Activated naive CD4-positive, alpha-beta T cell treated with anti-CD3 and anti-CD28 coated beads for 36 hours (primary cell): ENCODE measurements at regions of chr12 and their contacts with region 1.

Region 1: GRCh38 chr12:24778486-24779304 is 170.2 kb downstream of the BCAT1 start:
- DNase-seq: no peak
- H3K4me3 Mint-ChIP-seq: no peak overlapping the region
- H3K27ac Mint-ChIP-seq: no peak overlapping the region
- H3K4me1 Mint-ChIP-seq: no peaks in the 10 kb centered on the region
- H3K27me3 Mint-ChIP-seq: peaks cover 13% of the 10 kb centered on the region

Region 2: DNA sequence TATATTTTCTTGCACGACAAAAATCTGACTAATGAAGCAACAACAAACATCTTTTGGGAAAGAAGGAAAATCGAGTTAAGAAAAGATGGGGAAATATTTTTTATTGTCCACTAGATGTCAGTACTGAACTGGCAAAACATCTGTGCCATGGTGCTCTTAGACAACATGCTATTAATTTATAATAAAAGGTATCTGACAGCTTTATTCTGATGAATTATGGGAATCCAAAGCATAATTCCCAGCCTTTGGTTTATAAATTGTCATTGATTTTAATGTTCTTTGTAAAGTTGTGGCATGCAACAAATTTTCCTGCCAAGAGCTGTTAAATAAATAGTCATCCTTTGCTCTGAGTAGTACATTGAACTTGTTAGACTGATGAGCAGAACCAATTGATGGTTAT is 1922.5 kb before region 1 on chr12:
- CTCF ChIA-PET with region 1: interaction called, 3 read pairs
- intact Hi-C with region 1: loop called (anchors 5 kb)
- DNase-seq: no peak
- H3K4me3 Mint-ChIP-seq: no peak overlapping the region
- H3K27ac Mint-ChIP-seq: no peak overlapping the region
- H3K4me1 Mint-ChIP-seq: no peaks in the 10 kb centered on the region
- H3K27me3 Mint-ChIP-seq: peaks cover 15% of the 10 kb centered on the region

Region 3: GRCh38 chr12:23204933-23205778 is 1573.5 kb before region 1 on chr12:
- CTCF ChIA-PET with region 1: no interaction called
- intact Hi-C with region 1: loop called (anchors 1 kb)
- DNase-seq: peak; percentile 13
- H3K4me3 Mint-ChIP-seq: no peak overlapping the region
- H3K27ac Mint-ChIP-seq: no peak overlapping the region
- H3K4me1 Mint-ChIP-seq: no peaks in the 10 kb centered on the region
- H3K27me3 Mint-ChIP-seq: peaks cover 5% of the 10 kb centered on the region

Region 4: DNA sequence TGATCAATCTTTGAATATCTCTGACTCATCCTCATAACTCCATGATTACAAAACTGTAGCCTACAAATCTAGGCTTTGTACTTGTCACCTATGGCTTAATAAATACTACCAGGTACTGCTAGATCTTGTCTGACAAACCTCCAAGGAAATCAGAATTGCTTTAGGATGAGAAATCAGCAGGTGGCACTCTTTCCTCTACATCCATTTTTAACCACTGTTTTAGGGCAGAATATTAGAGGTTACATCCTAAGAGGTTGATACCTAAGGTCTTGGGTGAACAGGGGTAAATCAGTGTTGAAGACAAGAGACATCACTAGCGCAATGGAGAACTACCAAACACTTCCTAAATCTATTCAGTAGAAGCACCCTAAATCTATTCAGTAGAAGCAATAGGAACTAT is 766.2 kb before region 1 on chr12:
- CTCF ChIA-PET with region 1: no interaction called
- intact Hi-C with region 1: loop called (anchors 2 kb)
- DNase-seq: no peak
- H3K4me3 Mint-ChIP-seq: no peak overlapping the region
- H3K27ac Mint-ChIP-seq: no peak overlapping the region
- H3K4me1 Mint-ChIP-seq: no peaks in the 10 kb centered on the region
- H3K27me3 Mint-ChIP-seq: no peaks in the 10 kb centered on the region

Region 5: DNA sequence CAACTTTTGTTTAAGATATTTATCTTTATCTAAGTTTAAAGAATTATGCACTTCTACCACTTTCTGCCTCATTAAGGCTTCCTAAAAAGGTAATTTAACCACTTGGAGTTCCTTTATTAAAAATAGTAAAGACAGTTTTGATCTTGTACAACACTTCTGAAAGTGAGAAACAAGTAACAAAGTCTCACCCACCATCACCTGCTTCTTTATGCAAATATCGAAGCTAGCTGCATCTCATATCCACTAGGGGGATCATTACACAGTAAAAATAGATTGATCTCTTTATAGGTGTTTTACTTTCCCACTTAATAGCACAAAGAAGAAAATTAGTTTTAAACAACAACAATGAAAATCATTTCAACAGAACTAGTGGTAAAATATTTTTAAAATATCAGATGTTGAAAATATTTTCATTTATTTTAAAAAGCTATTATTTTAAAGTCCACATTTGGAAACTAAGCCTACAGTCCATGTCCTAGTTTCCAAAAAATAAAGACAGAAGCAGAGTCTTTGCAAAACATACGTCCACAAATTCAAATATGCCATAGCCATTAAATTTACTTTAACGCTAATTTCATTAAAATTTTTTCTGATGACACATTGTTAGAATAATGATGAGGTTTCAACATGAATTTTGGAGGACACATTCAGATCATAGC is 669.2 kb before region 1 on chr12:
- CTCF ChIA-PET with region 1: no interaction called
- intact Hi-C with region 1: loop called (anchors 2 kb)
- DNase-seq: no peak
- H3K4me3 Mint-ChIP-seq: no peak overlapping the region
- H3K27ac Mint-ChIP-seq: no peak overlapping the region
- H3K4me1 Mint-ChIP-seq: no peaks in the 10 kb centered on the region
- H3K27me3 Mint-ChIP-seq: no peaks in the 10 kb centered on the region

Region 6: GRCh38 chr12:24278832-24279231 is 499.9 kb before region 1 on chr12:
- CTCF ChIA-PET with region 1: no interaction called
- intact Hi-C with region 1: loop called (anchors 5 kb)
- DNase-seq: no peak
- H3K4me3 Mint-ChIP-seq: no peak overlapping the region
- H3K27ac Mint-ChIP-seq: no peak overlapping the region
- H3K4me1 Mint-ChIP-seq: no peaks in the 10 kb centered on the region
- H3K27me3 Mint-ChIP-seq: no peaks in the 10 kb centered on the region

Region 7: GRCh38 chr12:24596768-24597388 is 181.8 kb before region 1 on chr12:
- CTCF ChIA-PET with region 1: no interaction called
- intact Hi-C with region 1: loop called (anchors 5 kb)
- DNase-seq: no peak
- H3K4me3 Mint-ChIP-seq: no peak overlapping the region
- H3K27ac Mint-ChIP-seq: no peak overlapping the region
- H3K4me1 Mint-ChIP-seq: peaks cover 2% of the 10 kb centered on the region
- H3K27me3 Mint-ChIP-seq: peaks cover 7% of the 10 kb centered on the region

Region 8: DNA sequence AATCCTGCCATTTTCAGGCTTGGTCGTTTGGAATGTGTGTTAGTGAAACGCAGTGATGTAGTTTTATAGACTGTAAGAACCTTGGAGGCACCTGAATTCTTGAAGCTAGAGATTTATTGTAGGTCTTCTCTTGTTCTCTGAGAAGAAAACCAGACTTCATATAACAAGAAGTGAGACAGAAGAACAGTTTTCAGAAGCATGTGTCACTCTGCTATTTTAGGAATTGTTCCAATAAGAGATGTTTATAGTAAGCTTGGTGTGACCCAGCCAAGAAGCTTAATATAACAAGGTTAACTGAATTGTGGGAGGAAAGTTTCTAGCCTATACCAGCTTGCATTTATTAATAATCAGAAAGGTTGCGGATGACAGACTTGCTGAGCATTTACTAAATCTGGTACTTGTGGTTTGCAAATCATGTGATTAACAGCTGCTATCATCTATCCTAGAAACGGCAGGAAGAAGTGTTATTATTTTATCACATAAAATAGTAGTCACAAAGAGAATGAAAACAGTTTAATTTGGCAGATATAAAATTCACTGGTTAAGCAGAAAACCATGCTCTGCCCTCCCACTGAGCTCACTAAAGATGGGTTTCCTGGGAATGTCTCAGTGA is 219.4 kb after region 1 on chr12:
- CTCF ChIA-PET with region 1: no interaction called
- intact Hi-C with region 1: no loop called
- DNase-seq: peak; percentile 20
- H3K4me3 Mint-ChIP-seq: no peak overlapping the region
- H3K27ac Mint-ChIP-seq: peak overlapping the region; percentile 75
- H3K4me1 Mint-ChIP-seq: peaks cover 36% of the 10 kb centered on the region
- H3K27me3 Mint-ChIP-seq: no peaks in the 10 kb centered on the region